ENCODE measurements at regions of chr7 and their contacts with region 1.

Region 1: DNA sequence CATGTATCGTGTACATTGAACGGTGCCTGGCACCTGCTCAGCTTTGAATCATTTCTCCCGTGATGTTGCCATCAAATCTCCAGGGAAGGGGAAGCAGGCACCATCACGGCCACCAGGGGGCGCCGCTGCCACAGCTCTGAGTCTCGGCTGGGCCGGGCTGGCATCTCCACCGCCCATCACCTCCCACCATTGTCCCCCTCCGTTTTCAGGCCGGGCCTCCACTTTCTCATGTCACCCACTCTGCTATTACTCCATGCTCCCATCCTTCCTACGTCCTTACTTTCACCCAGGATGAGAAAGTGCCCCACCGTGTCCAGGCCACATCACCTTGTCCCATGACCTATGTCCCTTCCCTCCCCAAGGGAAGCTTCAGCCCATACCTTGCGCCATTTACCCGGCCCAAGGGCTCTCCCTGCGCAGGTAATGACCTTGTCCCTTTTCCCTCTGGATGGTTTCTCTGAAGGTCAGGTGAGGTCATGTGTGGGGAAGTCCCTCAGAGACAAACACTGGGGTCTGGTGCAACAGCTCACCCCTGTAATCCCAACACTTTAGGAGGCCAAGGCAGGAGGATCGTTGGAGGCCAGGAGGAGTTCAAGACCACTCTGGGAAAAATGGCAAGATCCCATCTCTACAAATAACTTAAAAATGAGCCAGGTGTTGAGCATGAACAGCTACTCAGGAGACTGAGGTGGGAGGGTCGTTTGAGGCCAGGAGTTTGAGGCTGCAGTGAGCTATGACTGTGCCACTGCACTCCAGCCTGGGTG is 31.8 kb upstream of the OCM2 start:
- DNase-seq: peak; percentile 46
- H3K4me3 ChIP-seq: no peak overlapping the region
- H3K27ac ChIP-seq: no peak overlapping the region
- H3K4me1 ChIP-seq: no peaks in the 10 kb centered on the region
- H3K27me3 ChIP-seq: no peaks in the 10 kb centered on the region
- CTCF ChIP-seq: peak; percentile 87 to 94
- POLR2A ChIP-seq: no peak

Region 2: GRCh38 chr7:98051118-98051744 is 29.5 kb after region 1 on chr7:
- CTCF ChIA-PET with region 1: interaction called, 10 read pairs
- POLR2A ChIA-PET with region 1: no interaction called
- dilution Hi-C with region 1: no loop called
- intact Hi-C with region 1: no loop called
- DNase-seq: no peak
- H3K4me3 ChIP-seq: no peak overlapping the region
- H3K27ac ChIP-seq: no peak overlapping the region
- H3K4me1 ChIP-seq: no peaks in the 10 kb centered on the region
- H3K27me3 ChIP-seq: no peaks in the 10 kb centered on the region
- CTCF ChIP-seq: no peak
- POLR2A ChIP-seq: no peak

Region 3: GRCh38 chr7:98106647-98107445 is 85.1 kb after region 1 on chr7 and contains the start of gene LMTK2:
- CTCF ChIA-PET with region 1: interaction called, 40 read pairs
- POLR2A ChIA-PET with region 1: no interaction called
- dilution Hi-C with region 1: no loop called
- intact Hi-C with region 1: loop called (anchors 1 kb)
- DNase-seq: peak; percentile 95
- H3K4me3 ChIP-seq: peak within 1 kb of the TSS; percentile 70 to 86 (median 80)
- H3K27ac ChIP-seq: peak within 1 kb of the TSS; percentile 68
- H3K4me1 ChIP-seq: peaks cover 32% of the 10 kb centered on the region
- H3K27me3 ChIP-seq: no peaks in the 10 kb centered on the region
- CTCF ChIP-seq: peak; percentile 87 to 96
- POLR2A ChIP-seq: peak; percentile 83
- total RNA-seq, gene LMTK2: 13.8 and 16.6 TPM in 2 replicates

Region 4: GRCh38 chr7:98168181-98168905 is 146.6 kb after region 1 on chr7:
- CTCF ChIA-PET with region 1: interaction called, 870 read pairs
- POLR2A ChIA-PET with region 1: interaction called, 13 read pairs
- dilution Hi-C with region 1: loop called (anchors 25 kb)
- intact Hi-C with region 1: loop called (anchors 1 kb)
- DNase-seq: peak; percentile 67
- H3K4me3 ChIP-seq: no peak overlapping the region
- H3K27ac ChIP-seq: no peak overlapping the region
- H3K4me1 ChIP-seq: peaks cover 3% of the 10 kb centered on the region
- H3K27me3 ChIP-seq: no peaks in the 10 kb centered on the region
- CTCF ChIP-seq: peak; percentile 66 to 73
- POLR2A ChIP-seq: no peak

Region 5: DNA sequence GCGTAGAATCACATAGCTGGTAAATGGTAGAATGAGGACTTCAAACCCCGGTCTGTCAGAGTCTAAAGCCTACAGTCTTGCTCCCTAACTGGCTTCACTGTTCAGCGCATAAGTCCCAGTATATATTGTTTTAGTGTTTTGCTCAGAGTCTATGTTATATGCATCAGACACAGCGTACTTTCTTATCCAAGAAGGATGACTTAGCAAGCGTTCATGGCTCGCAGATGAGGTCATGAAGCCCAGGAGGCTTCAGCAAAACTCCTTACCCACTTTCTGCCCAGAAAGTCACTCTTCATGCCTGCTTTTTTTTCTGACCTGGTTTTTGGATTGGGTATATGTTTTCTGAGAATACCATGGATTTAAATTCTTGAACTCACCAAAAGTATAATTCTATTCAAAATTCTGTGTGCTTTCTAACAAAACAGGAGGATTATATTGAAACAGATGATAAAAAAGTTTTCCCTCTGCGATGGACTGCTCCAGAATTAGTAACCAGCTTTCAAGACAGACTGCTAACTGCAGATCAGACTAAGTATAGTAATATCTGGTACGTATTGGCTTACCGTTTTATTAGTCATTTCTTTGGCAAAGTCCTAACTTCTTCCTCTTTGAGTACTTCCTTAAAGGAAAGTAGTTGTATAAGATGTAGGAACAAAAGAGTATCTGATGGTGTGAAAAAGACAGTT is 164.8 kb after region 1 on chr7:
- CTCF ChIA-PET with region 1: interaction called, 12 read pairs
- POLR2A ChIA-PET with region 1: no interaction called
- dilution Hi-C with region 1: no loop called
- intact Hi-C with region 1: no loop called
- DNase-seq: peak; percentile 63
- H3K4me3 ChIP-seq: no peak overlapping the region
- H3K27ac ChIP-seq: peak overlapping the region; percentile 58
- H3K4me1 ChIP-seq: peaks cover 11% of the 10 kb centered on the region
- H3K27me3 ChIP-seq: no peaks in the 10 kb centered on the region
- CTCF ChIP-seq: no peak
- POLR2A ChIP-seq: no peak

Region 6: GRCh38 chr7:98400542-98401340 is 379.0 kb after region 1 on chr7 and contains the start of gene BAIAP2L1:
- CTCF ChIA-PET with region 1: no interaction called
- POLR2A ChIA-PET with region 1: no interaction called
- dilution Hi-C with region 1: no loop called
- intact Hi-C with region 1: loop called (anchors 5 kb)
- DNase-seq: peak; percentile 60
- H3K4me3 ChIP-seq: peak within 1 kb of the TSS; percentile 32 to 36 (median 35)
- H3K27ac ChIP-seq: no peak within 1 kb of the TSS
- H3K4me1 ChIP-seq: no peaks in the 10 kb centered on the region
- H3K27me3 ChIP-seq: peaks cover 6 to 10% of the 10 kb centered on the region in 2 experiments
- CTCF ChIP-seq: peak in 1 of 2 donors; percentile 79
- POLR2A ChIP-seq: no peak
- total RNA-seq, gene BAIAP2L1: 1.1 and 1.2 TPM in 2 replicates

Measured in endothelial cell of umbilical vein (primary cell).